Right ventricle myocardium inferior (tissue), 1 donor: ENCODE measurements at regions of chr20 and their contacts with region 1.

Region 1: GRCh38 chr20:7113577-7114466 is 346.3 kb downstream of the BMP2 start:
- DNase-seq: no peak
- ATAC-seq: peak; percentile 90

Region 2: DNA sequence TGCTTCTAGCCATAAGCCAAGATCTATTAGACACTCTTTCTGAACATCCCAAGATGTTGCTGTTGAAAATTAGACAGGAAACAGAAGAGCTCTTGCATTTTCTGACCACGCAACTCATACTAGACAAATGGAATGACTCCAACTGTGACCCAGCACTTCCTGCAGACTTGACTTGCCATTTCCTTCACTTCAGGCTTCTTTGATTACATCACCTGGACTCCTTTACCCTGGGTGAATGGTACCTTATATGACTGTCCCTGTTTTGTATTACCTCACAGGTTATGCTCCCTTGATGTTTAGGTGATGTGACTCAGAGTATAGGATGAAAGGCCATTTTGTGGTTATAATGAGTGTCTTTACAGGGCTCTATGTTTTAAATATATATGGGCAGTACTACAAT is 110.2 kb before region 1 on chr20:
- intact Hi-C with region 1: no loop called
- DNase-seq: no peak
- ATAC-seq: no peak

Region 3: GRCh38 chr20:7161690-7162089 is 47.9 kb after region 1 on chr20:
- intact Hi-C with region 1: loop called (anchors 5 kb)
- DNase-seq: no peak
- ATAC-seq: no peak

Region 4: GRCh38 chr20:7257692-7258466 is 144.1 kb after region 1 on chr20:
- intact Hi-C with region 1: no loop called
- DNase-seq: peak; percentile 50
- ATAC-seq: peak; percentile 97

Region 5: GRCh38 chr20:7272512-7272911 is 158.7 kb after region 1 on chr20:
- intact Hi-C with region 1: loop called (anchors 5 kb)
- DNase-seq: no peak
- ATAC-seq: no peak